Ascending aorta (tissue), 2 donors: ENCODE measurements at regions of chr5 and their contacts with region 1.

Region 1: DNA sequence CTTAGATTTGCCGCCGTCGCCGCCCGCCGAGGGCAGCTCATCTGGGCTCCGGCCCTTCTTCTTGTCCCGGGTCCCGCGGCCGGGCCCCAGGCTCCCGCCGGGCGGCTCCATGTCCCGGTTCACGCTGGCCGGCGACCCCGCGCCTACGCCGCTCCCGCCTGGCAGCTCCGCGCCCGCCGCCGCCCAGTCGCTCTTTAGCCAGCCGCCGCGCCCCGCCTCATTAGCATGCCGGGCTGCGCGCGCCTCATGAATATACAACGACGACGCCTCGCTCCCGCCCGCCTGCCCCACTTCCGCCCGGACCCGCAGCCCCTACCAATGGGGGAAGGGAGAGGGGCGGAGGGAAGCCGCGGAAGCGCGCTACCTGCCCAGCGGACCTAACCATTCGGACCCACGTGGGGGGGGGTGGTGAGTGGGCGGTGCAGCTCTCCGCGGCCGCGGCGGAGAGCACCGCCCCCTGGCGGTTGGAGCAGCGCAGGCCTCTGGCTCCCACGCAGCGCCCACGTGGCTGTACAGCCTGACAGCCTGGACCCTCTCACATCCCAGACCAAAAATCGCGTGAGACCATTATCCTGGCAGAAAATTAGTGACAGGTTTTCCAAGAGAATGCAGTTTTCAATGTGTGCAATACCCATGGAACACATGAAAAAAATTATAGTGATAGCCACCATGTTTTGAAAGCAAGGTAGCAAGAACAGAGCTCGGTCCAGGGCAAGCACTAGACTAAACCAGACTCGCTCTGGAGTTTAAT is at the start of gene DIAPH1:
- DNase-seq: peak; percentile 91 to 99
- H3K4me3 ChIP-seq: peak within 1 kb of the TSS; percentile 69 to 100
- H3K27ac ChIP-seq: peak within 1 kb of the TSS; percentile 96 to 100
- H3K4me1 ChIP-seq: peaks cover 0 to 25% of the 10 kb centered on the region in 2 donors
- H3K27me3 ChIP-seq: no peaks in the 10 kb centered on the region
- CTCF ChIP-seq: peak; percentile 99 to 100 (median 99)
- total RNA-seq, gene DIAPH1: 65.8 TPM

Region 2: DNA sequence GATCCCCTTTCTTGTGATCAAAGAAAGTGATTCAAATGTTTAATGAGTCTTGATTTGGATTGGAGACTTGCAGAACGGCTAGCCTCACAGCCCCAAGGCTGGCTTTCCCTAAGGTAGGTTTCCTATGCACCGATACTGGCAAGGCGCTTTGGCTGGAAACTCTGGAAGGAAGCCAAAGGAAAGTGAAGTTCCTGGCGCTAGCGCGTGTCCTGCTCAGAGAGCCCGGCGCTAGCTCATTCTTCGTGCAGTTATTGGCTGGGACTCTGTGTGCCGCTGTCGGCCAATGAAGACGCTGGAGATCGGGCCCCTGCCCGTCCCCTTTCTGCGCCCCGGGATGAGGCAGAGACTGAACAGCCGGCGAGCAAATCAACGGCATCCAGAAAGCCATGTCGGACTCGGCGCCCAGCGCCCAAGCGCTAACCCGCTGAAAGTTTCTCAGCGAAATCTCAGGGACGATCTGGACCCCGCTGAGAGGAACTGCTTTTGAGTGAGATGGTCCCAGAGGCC is 143.3 kb before region 1 on chr5 and contains the start of gene PCDHGC3:
- intact Hi-C with region 1: loop called (anchors 5 kb)
- DNase-seq: peak; percentile 83 to 96
- H3K4me3 ChIP-seq: peak within 1 kb of the TSS; percentile 77 to 83
- H3K27ac ChIP-seq: peak within 1 kb of the TSS; percentile 90 to 92
- H3K4me1 ChIP-seq: peaks cover 15 to 34% of the 10 kb centered on the region in 2 donors
- H3K27me3 ChIP-seq: no peaks in the 10 kb centered on the region
- CTCF ChIP-seq: peak; percentile 25 to 57 (median 57)
- total RNA-seq, gene PCDHGC3: 51.4 TPM

Region 3: DNA sequence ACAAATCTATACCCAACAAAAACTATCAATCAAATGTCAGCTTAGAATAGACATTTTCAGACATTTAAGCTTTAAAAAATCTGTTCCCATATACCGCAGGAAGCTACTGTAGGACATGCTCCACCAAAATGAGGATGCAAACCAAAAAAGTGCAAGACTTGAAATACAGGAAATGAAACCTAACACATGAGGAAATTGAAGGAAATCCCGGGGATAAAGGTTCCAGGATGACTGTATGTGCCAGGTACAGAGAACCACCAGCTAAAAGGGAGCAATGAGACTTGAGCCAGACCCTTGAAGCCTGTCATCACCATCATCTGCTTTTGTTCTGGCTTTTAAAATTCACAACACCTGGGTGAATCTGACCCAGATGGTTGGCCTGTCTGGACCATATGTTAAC is 21.6 kb before region 1 on chr5:
- intact Hi-C with region 1: loop called (anchors 1 kb)
- DNase-seq: no peak
- H3K4me3 ChIP-seq: no peak overlapping the region
- H3K27ac ChIP-seq: peak overlapping the region in 1 of 2 donors; percentile 82
- H3K4me1 ChIP-seq: peaks cover 7 to 16% of the 10 kb centered on the region in 2 donors
- H3K27me3 ChIP-seq: no peaks in the 10 kb centered on the region
- CTCF ChIP-seq: no peak

Region 4: DNA sequence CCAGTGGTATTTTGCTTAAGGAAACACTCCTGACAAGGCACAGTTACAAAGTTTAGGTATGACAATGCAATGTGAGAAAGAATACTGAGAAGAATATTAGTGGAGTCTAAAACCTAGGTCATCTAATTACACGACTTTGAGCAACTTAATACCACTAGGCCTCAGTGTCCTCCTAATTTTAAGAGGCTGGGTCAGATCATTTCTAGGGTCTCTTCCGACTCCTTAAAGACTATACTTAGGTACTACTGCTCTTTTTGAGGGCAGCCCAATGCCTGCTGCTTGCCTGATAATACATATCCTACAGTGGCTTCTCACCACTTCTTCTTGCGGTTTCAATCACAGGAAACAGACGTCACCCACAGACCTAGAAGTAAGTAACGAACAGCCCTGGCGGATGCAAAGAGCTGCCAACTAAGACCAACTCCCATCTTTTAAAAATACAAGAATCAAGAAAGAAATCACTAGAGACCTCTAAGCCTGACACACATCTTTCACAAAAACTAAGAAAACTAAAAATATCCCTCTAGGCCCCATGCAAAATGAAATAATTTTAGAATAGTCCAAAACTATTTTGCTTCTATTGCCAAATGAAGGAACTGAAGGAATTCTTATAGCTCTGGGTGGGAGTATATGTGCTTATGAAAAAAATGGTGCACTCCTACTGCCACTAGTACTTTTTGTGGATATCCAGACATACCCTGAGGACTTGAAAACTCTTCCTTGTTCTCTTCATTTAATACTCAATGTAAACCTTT is 13.3 kb before region 1 on chr5:
- intact Hi-C with region 1: loop called (anchors 1 kb)
- DNase-seq: peak; percentile 25 to 78
- H3K4me3 ChIP-seq: peak overlapping the region in 1 of 2 donors; percentile 38
- H3K27ac ChIP-seq: peak overlapping the region; percentile 78 to 85
- H3K4me1 ChIP-seq: peaks cover 11 to 26% of the 10 kb centered on the region in 2 donors
- H3K27me3 ChIP-seq: no peaks in the 10 kb centered on the region
- CTCF ChIP-seq: no peak

Region 5: DNA sequence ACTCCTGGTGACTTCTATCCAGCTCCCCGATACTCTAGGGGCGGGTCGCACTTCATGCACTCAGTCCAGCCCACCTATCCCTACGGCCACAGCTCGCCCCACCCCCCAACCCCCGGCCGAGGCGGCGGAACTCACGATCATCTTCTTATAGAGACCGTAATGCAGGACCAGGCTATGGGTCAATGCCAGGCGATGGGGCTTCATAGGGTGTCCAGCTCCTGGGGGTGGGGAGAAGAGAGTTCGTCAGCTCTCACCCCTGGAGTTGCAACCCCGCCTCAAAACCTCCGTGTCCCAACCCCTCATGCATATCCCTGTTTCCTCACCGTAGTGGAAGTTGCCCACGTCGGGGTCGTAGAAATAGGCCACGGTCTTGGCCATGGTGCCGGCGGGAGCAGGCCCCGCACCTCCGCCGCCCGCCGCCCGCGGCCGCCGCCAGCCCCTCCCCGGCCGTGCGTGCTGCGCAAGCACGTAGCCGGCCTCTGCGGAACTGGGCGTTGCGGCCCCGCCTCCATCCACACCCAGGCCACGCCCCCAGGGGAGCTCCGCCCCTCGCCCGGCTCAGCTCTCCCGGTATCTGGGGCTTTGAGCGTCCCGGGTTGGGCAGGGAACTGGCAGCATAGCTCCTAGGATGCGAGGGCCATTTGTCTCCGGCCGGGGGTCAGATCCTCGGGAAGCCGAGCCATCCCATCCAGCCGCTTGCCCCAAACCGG is 17.6 kb after region 1 on chr5 and contains the starts of genes HDAC3 and RELL2:
- intact Hi-C with region 1: loop called (anchors 2 kb)
- DNase-seq: peak; percentile 70 to 95
- H3K4me3 ChIP-seq: peak within 1 kb of the TSS; percentile 81 to 82
- H3K27ac ChIP-seq: peak within 1 kb of the TSS; percentile 52 to 67
- H3K4me1 ChIP-seq: peaks cover 10 to 22% of the 10 kb centered on the region in 2 donors
- H3K27me3 ChIP-seq: no peaks in the 10 kb centered on the region
- CTCF ChIP-seq: no peak
- total RNA-seq, gene HDAC3: 43.4 TPM
- total RNA-seq, gene RELL2: 1.4 TPM